Activated naive CD8-positive, alpha-beta T cell treated with anti-CD3 and anti-CD28 coated beads, Interleukin-2, amount 10 ng/mL, durations not matched to agents 7 days and 5 days (primary cell): ENCODE measurements at regions of chr2 and their contacts with region 1.

Region 1: DNA sequence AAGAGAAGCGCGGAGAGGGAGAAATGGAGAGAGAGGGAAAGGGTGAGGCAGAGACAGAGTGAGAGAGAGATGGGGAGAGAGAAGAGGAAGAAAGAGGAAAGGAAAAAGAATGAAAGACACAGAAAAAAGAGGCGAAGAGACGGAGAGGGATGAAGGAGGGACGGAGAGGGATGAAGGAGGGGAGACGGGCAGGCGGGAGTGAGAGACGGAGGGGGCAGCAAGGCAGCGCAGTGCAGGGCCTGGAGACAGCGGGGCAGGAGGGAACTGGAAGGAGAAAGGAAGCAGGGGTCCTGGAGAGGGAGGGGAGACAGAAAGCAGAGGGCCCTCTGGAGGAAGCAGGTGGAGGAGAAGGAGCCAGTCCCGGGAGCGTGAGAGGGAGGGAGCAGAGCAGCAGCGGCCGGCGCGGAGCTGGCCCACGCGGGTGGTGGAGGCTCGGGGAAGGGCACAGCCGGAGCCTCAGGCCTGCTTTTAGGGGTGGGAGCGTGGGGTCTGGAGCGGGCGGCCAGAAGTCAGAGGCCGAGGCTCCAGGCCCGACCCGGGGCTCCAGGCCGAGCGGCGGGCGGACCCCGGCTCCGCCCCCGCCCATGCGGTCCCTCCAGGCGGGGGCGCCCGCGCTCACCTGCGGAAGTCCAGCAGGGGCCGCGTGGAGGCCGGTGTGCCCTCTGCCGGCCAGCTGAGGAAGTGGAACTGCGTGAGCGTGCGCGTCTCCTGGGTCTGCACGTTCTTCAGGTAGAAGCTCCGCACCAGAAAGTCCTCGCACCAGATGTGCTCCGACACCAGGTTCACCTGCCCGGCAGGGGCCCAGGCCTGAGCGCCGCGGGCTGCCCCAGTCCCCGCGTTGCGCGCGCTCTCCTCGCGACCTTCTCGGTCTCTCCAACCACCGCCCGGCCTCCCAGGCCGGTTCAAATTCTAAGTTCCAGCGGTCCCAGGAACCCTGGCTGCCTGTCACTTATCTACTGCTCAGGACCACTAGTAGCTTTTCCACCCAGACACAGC is 14.5 kb downstream of the PTPRN start:
- DNase-seq: peak; percentile 95
- ATAC-seq: peak; percentile 92
- H3K4me3 Mint-ChIP-seq: peak overlapping the region; percentile 84
- H3K27ac Mint-ChIP-seq: peak overlapping the region; percentile 70
- H3K4me1 Mint-ChIP-seq: peaks cover 23% of the 10 kb centered on the region
- H3K27me3 Mint-ChIP-seq: peaks cover 8% of the 10 kb centered on the region

Region 2: GRCh38 chr2:219160186-219161017 is 134.3 kb before region 1 on chr2 and contains the start of gene NHEJ1:
- POLR2A ChIA-PET with region 1: interaction called, 10 read pairs
- DNase-seq: peak; percentile 96
- ATAC-seq: peak; percentile 92
- H3K4me3 Mint-ChIP-seq: peak within 1 kb of the TSS; percentile 85
- H3K27ac Mint-ChIP-seq: peak within 1 kb of the TSS; percentile 96
- H3K4me1 Mint-ChIP-seq: peaks cover 15% of the 10 kb centered on the region
- H3K27me3 Mint-ChIP-seq: no peaks in the 10 kb centered on the region
- total RNA-seq, gene NHEJ1: 16.7 to 17.1 TPM

Region 3: GRCh38 chr2:219278655-219279516 is 15.8 kb before region 1 on chr2 and contains the start of gene DNAJB2:
- POLR2A ChIA-PET with region 1: interaction called, 16 read pairs
- DNase-seq: peak; percentile 97
- ATAC-seq: peak; percentile 91
- H3K4me3 Mint-ChIP-seq: peak within 1 kb of the TSS; percentile 98
- H3K27ac Mint-ChIP-seq: peak within 1 kb of the TSS; percentile 99
- H3K4me1 Mint-ChIP-seq: peaks cover 38% of the 10 kb centered on the region
- H3K27me3 Mint-ChIP-seq: peaks cover 4% of the 10 kb centered on the region
- total RNA-seq, gene DNAJB2: 65.9 to 67.5 TPM

Region 4: GRCh38 chr2:219484343-219485200 is 189.9 kb after region 1 on chr2:
- POLR2A ChIA-PET with region 1: no interaction called
- DNase-seq: peak; percentile 40
- ATAC-seq: peak; percentile 21
- H3K4me3 Mint-ChIP-seq: peak overlapping the region; percentile 13
- H3K27ac Mint-ChIP-seq: no peak overlapping the region
- H3K4me1 Mint-ChIP-seq: peaks cover 5% of the 10 kb centered on the region
- H3K27me3 Mint-ChIP-seq: peaks cover 36% of the 10 kb centered on the region